ENCODE measurements at regions of chr14 and their contacts with region 1.

Region 1: GRCh38 chr14:54175298-54175942 is 218.8 kb upstream of the BMP4 start:
- DNase-seq: peak; percentile 59
- H3K4me3 ChIP-seq: no peak overlapping the region
- H3K27ac ChIP-seq: no peak overlapping the region
- H3K4me1 ChIP-seq: no peaks in the 10 kb centered on the region
- H3K27me3 ChIP-seq: no peaks in the 10 kb centered on the region
- CTCF ChIP-seq: peak; percentile 67 to 84 (median 81)
- POLR2A ChIP-seq: no peak

Region 2: GRCh38 chr14:53295985-53296582 is 879.3 kb before region 1 on chr14:
- intact Hi-C with region 1: loop called (anchors 10 kb)
- DNase-seq: no peak
- H3K4me3 ChIP-seq: no peak overlapping the region
- H3K27ac ChIP-seq: no peak overlapping the region
- H3K4me1 ChIP-seq: no peaks in the 10 kb centered on the region
- H3K27me3 ChIP-seq: no peaks in the 10 kb centered on the region
- CTCF ChIP-seq: peak; percentile 47 to 85 (median 58)
- POLR2A ChIP-seq: no peak

Region 3: GRCh38 chr14:54108481-54109471 is 66.6 kb before region 1 on chr14:
- intact Hi-C with region 1: no loop called
- DNase-seq: no peak
- H3K4me3 ChIP-seq: no peak overlapping the region
- H3K27ac ChIP-seq: no peak overlapping the region
- H3K4me1 ChIP-seq: no peaks in the 10 kb centered on the region
- H3K27me3 ChIP-seq: no peaks in the 10 kb centered on the region
- CTCF ChIP-seq: no peak
- POLR2A ChIP-seq: no peak

Region 4: GRCh38 chr14:54338696-54339317 is 163.4 kb after region 1 on chr14:
- intact Hi-C with region 1: loop called (anchors 5 kb)
- DNase-seq: no peak
- H3K4me3 ChIP-seq: no peak overlapping the region
- H3K27ac ChIP-seq: no peak overlapping the region
- H3K4me1 ChIP-seq: peaks cover 4% of the 10 kb centered on the region
- H3K27me3 ChIP-seq: no peaks in the 10 kb centered on the region
- CTCF ChIP-seq: peak in 2 of 4 experiments; percentile 29 to 42
- POLR2A ChIP-seq: no peak

Measured in prostate gland (tissue), 2 donors.